RWPE1 (cell line): ENCODE measurements at regions of chr5 and their contacts with region 1.

Region 1: GRCh38 chr5:165263536-165263935 is 1758.1 kb downstream of the MAT2B start:
- DNase-seq: peak; percentile 16
- H3K27ac ChIP-seq: no peak overlapping the region
- CTCF ChIP-seq: no peak

Region 2: GRCh38 chr5:163677084-163677483 is 1586.5 kb before region 1 on chr5:
- CTCF ChIA-PET with region 1: interaction called, 10 read pairs
- POLR2A ChIA-PET with region 1: no interaction called
- DNase-seq: no peak
- H3K27ac ChIP-seq: no peak overlapping the region
- CTCF ChIP-seq: no peak